ENCODE measurements at regions of chr14 and their contacts with region 1.

Region 1: GRCh38 chr14:90235179-90235976 is 21.0 kb upstream of the PSMC1 start:
- DNase-seq: peak; percentile 79
- ATAC-seq: peak; percentile 90 to 96
- H3K4me3 ChIP-seq: no peak overlapping the region
- H3K27ac ChIP-seq: no peak overlapping the region
- H3K4me1 ChIP-seq: no peaks in the 10 kb centered on the region
- H3K27me3 ChIP-seq: peaks cover 15% of the 10 kb centered on the region
- CTCF ChIP-seq: peak; percentile 95

Region 2: GRCh38 chr14:89445273-89445973 is 790.0 kb before region 1 on chr14:
- intact Hi-C with region 1: no loop called
- DNase-seq: no peak
- ATAC-seq: peak in 1 of 2 donors; percentile 21
- H3K4me3 ChIP-seq: no peak overlapping the region
- H3K27ac ChIP-seq: no peak overlapping the region
- H3K4me1 ChIP-seq: peaks cover 36% of the 10 kb centered on the region
- H3K27me3 ChIP-seq: no peaks in the 10 kb centered on the region
- CTCF ChIP-seq: no peak

Region 3: DNA sequence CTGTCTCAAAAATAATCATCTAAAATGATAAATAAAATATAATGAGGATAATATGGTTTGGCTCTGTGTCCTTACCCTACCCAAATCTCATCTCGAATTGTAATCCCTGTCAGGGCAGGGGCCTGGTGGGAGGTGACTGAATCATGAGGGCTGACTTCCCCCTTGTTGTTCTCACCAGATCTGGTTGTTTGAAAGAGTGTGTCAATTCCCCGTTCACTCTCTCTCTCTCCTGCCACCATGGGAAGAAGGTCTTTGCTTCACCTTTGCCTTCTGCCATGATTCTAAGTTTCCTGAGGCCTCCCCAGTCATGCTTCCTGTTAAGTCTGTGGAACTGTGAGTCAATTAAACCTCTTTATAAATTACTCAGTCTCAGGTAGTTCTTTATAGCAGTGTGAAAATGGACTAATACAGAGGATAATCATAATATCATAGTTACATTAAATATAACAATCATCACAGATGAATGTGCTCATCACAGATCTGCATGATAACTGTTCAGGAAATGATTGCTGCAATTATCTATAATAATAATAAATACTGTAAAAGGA is 293.5 kb before region 1 on chr14:
- intact Hi-C with region 1: loop called (anchors 5 kb)
- DNase-seq: no peak
- ATAC-seq: no peak
- H3K4me3 ChIP-seq: no peak overlapping the region
- H3K27ac ChIP-seq: no peak overlapping the region
- H3K4me1 ChIP-seq: no peaks in the 10 kb centered on the region
- H3K27me3 ChIP-seq: no peaks in the 10 kb centered on the region
- CTCF ChIP-seq: no peak